GM12878 (cell line): ENCODE measurements at regions of chr2 and their contacts with region 1.

Region 1: GRCh38 chr2:32010670-32011484 is at the start of gene MEMO1:
- DNase-seq: peak; percentile 87
- ATAC-seq: peak; percentile 80
- H3K4me3 ChIP-seq: peak within 1 kb of the TSS; percentile 96
- H3K27ac ChIP-seq: peak within 1 kb of the TSS; percentile 91
- H3K4me1 ChIP-seq: peaks cover 17% of the 10 kb centered on the region
- H3K27me3 ChIP-seq: no peaks in the 10 kb centered on the region
- CTCF ChIP-seq: no peak; a peak in 1 of 6 replicates
- EP300 ChIP-seq: peak; percentile 53 to 69
- POLR2A ChIP-seq: peak; percentile 90
- RAD21 ChIP-seq: 0 out of 2 replicates have a peak, but pooled peaks have one; percentile 6
- polyA plus RNA-seq, gene MEMO1: 73.9 to 99.1 TPM

Region 2: GRCh38 chr2:31886697-31887096 is 124.2 kb before region 1 on chr2:
- CTCF ChIA-PET with region 1: interaction called, 6 read pairs
- POLR2A ChIA-PET with region 1: interaction called, 8 read pairs
- RAD21 ChIA-PET with region 1: interaction called, 8 read pairs
- SMC1A ChIA-PET with region 1: interaction called, 15 read pairs
- in situ Hi-C with region 1: no loop called
- intact Hi-C with region 1: no loop called
- DNase-seq: no peak
- ATAC-seq: peak; percentile 89
- H3K4me3 ChIP-seq: no peak overlapping the region
- H3K27ac ChIP-seq: no peak overlapping the region
- H3K4me1 ChIP-seq: peaks cover 12% of the 10 kb centered on the region
- H3K27me3 ChIP-seq: no peaks in the 10 kb centered on the region
- CTCF ChIP-seq: peak; percentile 50 to 54 (median 54); a peak in 5 of 6 replicates
- EP300 ChIP-seq: no peak
- POLR2A ChIP-seq: no peak
- RAD21 ChIP-seq: peak; percentile 67

Region 3: DNA sequence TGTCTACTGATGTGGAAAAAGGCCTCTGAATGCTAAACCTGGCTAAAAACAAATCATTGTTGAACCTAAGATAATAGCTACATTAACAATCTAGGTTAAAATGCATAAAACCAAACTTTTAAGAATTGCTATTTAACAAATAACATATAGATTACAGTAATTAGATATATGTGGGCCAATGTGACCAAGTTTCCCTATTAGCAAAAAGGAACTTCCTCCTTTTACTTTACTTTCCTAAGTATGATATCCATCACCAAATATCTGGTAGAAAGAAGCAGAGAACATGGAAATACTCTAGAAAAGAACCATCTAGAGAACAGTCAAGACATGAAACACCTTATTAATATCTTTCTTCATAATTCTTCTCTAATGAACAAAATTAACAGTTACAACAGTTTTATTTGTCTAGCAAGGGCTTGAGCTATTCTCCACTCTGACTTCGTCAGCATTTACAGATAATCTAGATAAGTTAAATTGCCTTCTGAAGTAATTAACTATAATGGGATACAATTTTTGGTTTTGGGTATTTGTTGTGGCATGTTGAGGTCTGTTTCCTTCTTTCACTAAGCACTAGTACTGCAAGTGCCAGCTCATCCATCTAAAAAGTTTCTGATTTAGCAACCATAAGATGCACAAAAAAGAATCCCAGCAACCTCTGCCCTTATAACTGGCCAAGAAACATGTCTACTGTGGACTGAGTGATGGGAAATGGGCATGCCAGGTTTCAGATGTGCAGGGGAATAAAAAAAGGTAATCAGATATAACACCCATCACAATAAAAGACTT is 53.3 kb before region 1 on chr2:
- CTCF ChIA-PET with region 1: interaction called, 3 read pairs
- POLR2A ChIA-PET with region 1: interaction called, 6 read pairs
- RAD21 ChIA-PET with region 1: interaction called, 12 read pairs
- SMC1A ChIA-PET with region 1: interaction called, 12 read pairs
- in situ Hi-C with region 1: no loop called
- intact Hi-C with region 1: no loop called
- DNase-seq: no peak
- ATAC-seq: peak; percentile 56
- H3K4me3 ChIP-seq: no peak overlapping the region
- H3K27ac ChIP-seq: peak overlapping the region; percentile 59
- H3K4me1 ChIP-seq: peaks cover 32% of the 10 kb centered on the region
- H3K27me3 ChIP-seq: no peaks in the 10 kb centered on the region
- CTCF ChIP-seq: no peak
- EP300 ChIP-seq: no peak
- POLR2A ChIP-seq: no peak
- RAD21 ChIP-seq: no peak

Region 4: DNA sequence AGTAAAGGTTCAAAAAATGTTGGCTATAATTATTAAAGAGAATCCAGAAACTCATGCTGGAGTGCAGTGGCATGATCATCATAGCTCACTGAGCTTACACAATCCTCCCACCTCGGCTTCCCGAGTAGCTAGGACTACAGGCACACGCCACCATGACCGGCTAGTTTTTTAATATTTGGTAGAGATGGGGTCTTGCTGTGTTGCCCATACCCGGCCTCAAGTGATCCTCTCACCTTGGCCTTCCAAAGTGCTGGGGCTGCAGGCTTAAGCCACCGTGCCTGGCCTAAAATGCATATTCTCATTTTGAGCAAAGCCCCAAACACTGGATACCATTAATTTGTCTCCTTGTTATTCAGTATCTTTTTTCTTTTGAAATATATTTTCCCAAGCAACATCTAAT is 32.4 kb before region 1 on chr2:
- CTCF ChIA-PET with region 1: interaction called, 4 read pairs
- POLR2A ChIA-PET with region 1: interaction called, 4 read pairs
- RAD21 ChIA-PET with region 1: interaction called, 7 read pairs
- SMC1A ChIA-PET with region 1: interaction called, 13 read pairs
- in situ Hi-C with region 1: no loop called
- intact Hi-C with region 1: no loop called
- DNase-seq: no peak
- ATAC-seq: no peak
- H3K4me3 ChIP-seq: no peak overlapping the region
- H3K27ac ChIP-seq: no peak overlapping the region
- H3K4me1 ChIP-seq: peaks cover 19% of the 10 kb centered on the region
- H3K27me3 ChIP-seq: no peaks in the 10 kb centered on the region
- CTCF ChIP-seq: no peak
- EP300 ChIP-seq: no peak
- POLR2A ChIP-seq: no peak
- RAD21 ChIP-seq: no peak

Region 5: GRCh38 chr2:32039447-32040219 is 28.8 kb after region 1 on chr2 and contains the start of gene DPY30:
- CTCF ChIA-PET with region 1: interaction called, 4 read pairs
- POLR2A ChIA-PET with region 1: interaction called, 9 read pairs
- RAD21 ChIA-PET with region 1: interaction called, 12 read pairs
- SMC1A ChIA-PET with region 1: interaction called, 19 read pairs
- in situ Hi-C with region 1: no loop called
- intact Hi-C with region 1: no loop called
- DNase-seq: peak; percentile 62
- ATAC-seq: peak; percentile 98
- H3K4me3 ChIP-seq: peak within 1 kb of the TSS; percentile 97
- H3K27ac ChIP-seq: peak within 1 kb of the TSS; percentile 67
- H3K4me1 ChIP-seq: no peaks in the 10 kb centered on the region
- H3K27me3 ChIP-seq: no peaks in the 10 kb centered on the region
- CTCF ChIP-seq: no peak
- EP300 ChIP-seq: no peak
- POLR2A ChIP-seq: peak; percentile 100
- RAD21 ChIP-seq: no peak
- polyA plus RNA-seq, gene DPY30: 287 to 307 TPM

Region 6: GRCh38 chr2:32168513-32168912 is 157.6 kb after region 1 on chr2:
- CTCF ChIA-PET with region 1: no interaction called
- POLR2A ChIA-PET with region 1: interaction called, 10 read pairs
- RAD21 ChIA-PET with region 1: interaction called, 3 read pairs
- SMC1A ChIA-PET with region 1: no interaction called
- in situ Hi-C with region 1: no loop called
- intact Hi-C with region 1: no loop called
- DNase-seq: peak; percentile 66
- ATAC-seq: peak; percentile 58
- H3K4me3 ChIP-seq: no peak overlapping the region
- H3K27ac ChIP-seq: no peak overlapping the region
- H3K4me1 ChIP-seq: peaks cover 9% of the 10 kb centered on the region
- H3K27me3 ChIP-seq: no peaks in the 10 kb centered on the region
- CTCF ChIP-seq: no peak
- EP300 ChIP-seq: no peak
- POLR2A ChIP-seq: no peak
- RAD21 ChIP-seq: no peak